Left ventricle myocardium inferior (tissue), 1 donor: ENCODE measurements at regions of chr3 and their contacts with region 1.

Region 1: GRCh38 chr3:16040991-16041390 is 133.5 kb upstream of the GALNT15 start:
- DNase-seq: no peak
- H3K4me3 ChIP-seq: no peak overlapping the region
- H3K27ac ChIP-seq: no peak overlapping the region
- H3K4me1 ChIP-seq: no peaks in the 10 kb centered on the region
- H3K27me3 ChIP-seq: no peaks in the 10 kb centered on the region
- CTCF ChIP-seq: no peak

Region 2: DNA sequence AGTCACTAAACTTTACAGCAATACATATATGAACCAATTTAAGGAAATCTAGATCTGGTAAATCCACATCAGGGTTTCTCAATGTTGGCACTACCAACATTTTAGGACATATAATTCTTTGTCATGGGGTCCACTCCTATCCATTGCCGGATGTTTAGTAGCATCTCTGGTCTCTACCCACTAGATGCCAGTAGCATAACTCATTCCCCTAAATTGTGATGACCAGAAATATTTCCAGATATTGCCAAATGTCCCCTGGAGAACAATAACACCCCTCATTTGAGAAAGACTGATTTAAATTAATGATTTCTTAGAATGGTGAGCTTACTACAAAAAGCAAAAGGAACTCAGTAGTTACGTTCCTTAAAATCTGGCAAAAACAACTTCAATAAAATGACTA is 220.1 kb before region 1 on chr3:
- intact Hi-C with region 1: loop called (anchors 5 kb)
- DNase-seq: no peak
- H3K4me3 ChIP-seq: no peak overlapping the region
- H3K27ac ChIP-seq: no peak overlapping the region
- H3K4me1 ChIP-seq: peaks cover 32% of the 10 kb centered on the region
- H3K27me3 ChIP-seq: no peaks in the 10 kb centered on the region
- CTCF ChIP-seq: no peak

Region 3: GRCh38 chr3:16012086-16012485 is 28.9 kb before region 1 on chr3:
- intact Hi-C with region 1: no loop called
- DNase-seq: no peak
- H3K4me3 ChIP-seq: no peak overlapping the region
- H3K27ac ChIP-seq: no peak overlapping the region
- H3K4me1 ChIP-seq: no peaks in the 10 kb centered on the region
- H3K27me3 ChIP-seq: no peaks in the 10 kb centered on the region
- CTCF ChIP-seq: no peak

Region 4: DNA sequence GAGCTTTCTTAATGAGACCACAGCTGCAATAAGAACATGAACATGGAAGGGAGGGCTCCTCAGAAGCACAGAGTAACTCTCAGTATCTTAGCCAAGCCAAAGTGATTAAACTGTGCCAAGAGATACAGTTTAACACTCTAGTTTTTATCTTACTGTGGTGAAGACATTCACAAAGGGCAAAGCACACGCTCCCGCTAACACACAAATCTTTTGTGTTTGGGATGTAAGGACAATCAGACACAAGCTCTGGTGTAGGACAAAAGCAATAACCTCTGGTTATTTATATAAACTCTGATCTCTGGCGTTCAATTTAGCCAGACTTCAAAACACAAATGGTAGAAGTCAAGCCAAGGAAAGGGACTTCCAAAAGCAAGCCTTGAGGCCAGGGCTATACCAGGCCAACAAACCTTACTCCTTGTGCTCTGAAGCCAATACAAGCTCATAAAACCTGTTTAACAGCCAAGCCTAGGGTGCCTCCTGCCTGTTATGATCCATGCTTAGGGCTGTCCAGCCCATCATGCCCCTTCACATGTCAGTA is 195.9 kb after region 1 on chr3:
- intact Hi-C with region 1: no loop called
- DNase-seq: no peak
- H3K4me3 ChIP-seq: no peak overlapping the region
- H3K27ac ChIP-seq: peak overlapping the region; percentile 34
- H3K4me1 ChIP-seq: peaks cover 36% of the 10 kb centered on the region
- H3K27me3 ChIP-seq: no peaks in the 10 kb centered on the region
- CTCF ChIP-seq: no peak